Ascending aorta (tissue), 2 donors: ENCODE measurements at regions of chr4 and their contacts with region 1.

Region 1: DNA sequence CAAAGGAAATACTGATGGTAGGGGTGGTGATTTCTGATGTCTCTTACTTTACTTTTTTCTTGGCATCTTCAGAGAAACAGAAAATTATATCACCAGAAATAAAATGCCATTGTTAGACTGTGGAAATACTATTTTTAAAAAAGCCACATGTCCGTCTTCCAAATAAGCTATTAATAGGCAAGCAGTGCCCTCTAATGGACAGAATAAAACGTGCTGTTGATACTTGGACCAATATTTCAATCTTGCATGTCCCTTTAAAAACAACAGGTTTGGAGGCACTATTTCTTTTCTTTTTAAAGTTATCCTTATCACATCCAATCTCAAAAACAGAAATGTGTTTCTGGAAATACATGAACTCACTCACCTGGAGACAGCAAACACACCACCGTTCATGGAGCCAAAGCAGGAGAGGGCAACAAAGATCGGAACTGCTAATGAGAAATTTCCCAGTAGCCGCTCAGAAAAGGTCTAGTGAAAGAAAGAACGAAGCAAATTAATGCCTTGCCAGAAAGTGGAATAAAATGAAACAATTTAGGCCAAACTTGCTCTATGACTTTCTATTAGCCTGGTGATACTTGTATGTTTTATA is 59.2 kb downstream of the SLC7A11 start:
- DNase-seq: no peak
- H3K4me3 ChIP-seq: no peak overlapping the region
- H3K27ac ChIP-seq: no peak overlapping the region
- H3K4me1 ChIP-seq: no peaks in the 10 kb centered on the region
- H3K27me3 ChIP-seq: no peaks in the 10 kb centered on the region
- CTCF ChIP-seq: peak; percentile 40 to 71 (median 60)

Region 2: GRCh38 chr4:137124278-137124932 is 1058.5 kb before region 1 on chr4:
- intact Hi-C with region 1: loop called (anchors 10 kb)
- DNase-seq: no peak
- H3K4me3 ChIP-seq: peak overlapping the region; percentile 46 to 56
- H3K27ac ChIP-seq: no peak overlapping the region
- H3K4me1 ChIP-seq: no peaks in the 10 kb centered on the region
- H3K27me3 ChIP-seq: no peaks in the 10 kb centered on the region
- CTCF ChIP-seq: peak; percentile 50 to 75 (median 69)

Region 3: GRCh38 chr4:138035781-138036258 is 147.1 kb before region 1 on chr4:
- intact Hi-C with region 1: loop called (anchors 2 kb)
- DNase-seq: peak in 1 of 2 donors; percentile 59
- H3K4me3 ChIP-seq: no peak overlapping the region
- H3K27ac ChIP-seq: no peak overlapping the region
- H3K4me1 ChIP-seq: no peaks in the 10 kb centered on the region
- H3K27me3 ChIP-seq: no peaks in the 10 kb centered on the region
- CTCF ChIP-seq: peak; percentile 45 to 70 (median 50)

Region 4: DNA sequence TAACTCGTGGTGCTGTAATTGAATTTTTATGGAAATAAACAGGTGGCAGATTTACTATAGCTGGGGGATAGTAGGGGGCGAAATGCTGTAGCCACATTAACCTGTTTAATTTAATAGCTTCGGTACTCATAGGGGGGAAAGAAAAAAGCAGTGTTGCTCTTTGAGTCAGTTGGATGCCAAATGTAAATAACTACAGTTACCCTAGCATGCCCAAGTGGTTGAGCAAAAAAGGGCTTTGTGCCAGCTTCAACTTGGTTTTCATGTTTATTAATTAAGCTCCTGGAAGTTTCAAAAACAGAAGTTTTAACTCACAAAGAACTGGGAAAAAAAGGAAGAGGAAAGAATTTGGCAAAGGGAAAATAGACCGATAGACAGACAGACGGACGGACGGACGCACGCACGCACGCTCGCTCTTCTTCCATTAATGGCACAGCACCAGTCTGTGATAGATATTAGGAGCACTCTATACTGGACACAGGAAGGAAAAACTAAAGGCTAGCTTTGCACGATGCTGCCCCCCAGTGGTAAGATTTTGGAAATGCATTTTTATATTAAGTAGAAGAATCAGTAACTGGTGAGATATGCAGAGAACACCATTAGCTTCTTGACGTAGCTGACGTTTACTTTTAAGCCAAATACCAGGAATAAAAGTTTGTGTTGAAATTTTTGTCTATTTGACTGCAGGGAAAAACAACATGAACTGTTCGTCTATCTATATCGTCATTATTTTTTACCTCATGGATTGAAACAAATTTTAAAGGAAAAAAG is 92.6 kb before region 1 on chr4:
- intact Hi-C with region 1: loop called (anchors 5 kb)
- DNase-seq: peak in 1 of 2 donors; percentile 68
- H3K4me3 ChIP-seq: peak overlapping the region; percentile 39 to 48
- H3K27ac ChIP-seq: no peak overlapping the region
- H3K4me1 ChIP-seq: peaks cover 2% of the 10 kb centered on the region in 2 donors
- H3K27me3 ChIP-seq: no peaks in the 10 kb centered on the region
- CTCF ChIP-seq: peak; percentile 50 to 79 (median 73)

Region 5: GRCh38 chr4:138114434-138114833 is 68.5 kb before region 1 on chr4:
- intact Hi-C with region 1: no loop called
- DNase-seq: no peak
- H3K4me3 ChIP-seq: no peak overlapping the region
- H3K27ac ChIP-seq: no peak overlapping the region
- H3K4me1 ChIP-seq: no peaks in the 10 kb centered on the region
- H3K27me3 ChIP-seq: no peaks in the 10 kb centered on the region
- CTCF ChIP-seq: no peak

Region 6: DNA sequence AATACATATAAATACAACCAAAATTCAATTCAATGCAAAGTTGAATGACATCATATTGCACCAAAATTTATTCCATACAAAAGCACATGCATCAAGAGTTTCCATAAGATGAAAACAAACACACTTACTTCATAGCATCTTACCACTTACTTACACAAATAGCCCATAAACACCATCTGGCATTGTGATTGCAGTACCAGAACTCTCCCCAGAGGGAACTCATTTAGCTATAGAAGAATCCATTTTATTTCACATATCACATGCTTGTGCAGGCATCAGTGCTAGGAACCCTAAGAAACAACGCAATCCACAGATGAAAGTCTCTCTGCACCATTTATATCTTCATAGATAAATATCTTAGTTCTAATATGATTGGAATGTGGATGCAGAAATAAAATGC is 18.7 kb before region 1 on chr4:
- intact Hi-C with region 1: loop called (anchors 2 kb)
- DNase-seq: no peak
- H3K4me3 ChIP-seq: no peak overlapping the region
- H3K27ac ChIP-seq: no peak overlapping the region
- H3K4me1 ChIP-seq: no peaks in the 10 kb centered on the region
- H3K27me3 ChIP-seq: no peaks in the 10 kb centered on the region
- CTCF ChIP-seq: no peak

Region 7: GRCh38 chr4:138680989-138681604 is 498.2 kb after region 1 on chr4:
- intact Hi-C with region 1: loop called (anchors 5 kb)
- DNase-seq: peak in 1 of 2 donors; percentile 85
- H3K4me3 ChIP-seq: no peak overlapping the region
- H3K27ac ChIP-seq: no peak overlapping the region
- H3K4me1 ChIP-seq: peaks cover 2 to 3% of the 10 kb centered on the region in 2 donors
- H3K27me3 ChIP-seq: no peaks in the 10 kb centered on the region
- CTCF ChIP-seq: peak; percentile 74 to 91 (median 85)

Region 8: GRCh38 chr4:138870737-138871554 is 688.0 kb after region 1 on chr4:
- intact Hi-C with region 1: loop called (anchors 10 kb)
- DNase-seq: peak in 1 of 2 donors; percentile 77
- H3K4me3 ChIP-seq: no peak overlapping the region
- H3K27ac ChIP-seq: no peak overlapping the region
- H3K4me1 ChIP-seq: no peaks in the 10 kb centered on the region
- H3K27me3 ChIP-seq: no peaks in the 10 kb centered on the region
- CTCF ChIP-seq: peak; percentile 60 to 82 (median 75)